PC-9 (cell line): ENCODE measurements at regions of chrX and their contacts with region 1.

Region 1: DNA sequence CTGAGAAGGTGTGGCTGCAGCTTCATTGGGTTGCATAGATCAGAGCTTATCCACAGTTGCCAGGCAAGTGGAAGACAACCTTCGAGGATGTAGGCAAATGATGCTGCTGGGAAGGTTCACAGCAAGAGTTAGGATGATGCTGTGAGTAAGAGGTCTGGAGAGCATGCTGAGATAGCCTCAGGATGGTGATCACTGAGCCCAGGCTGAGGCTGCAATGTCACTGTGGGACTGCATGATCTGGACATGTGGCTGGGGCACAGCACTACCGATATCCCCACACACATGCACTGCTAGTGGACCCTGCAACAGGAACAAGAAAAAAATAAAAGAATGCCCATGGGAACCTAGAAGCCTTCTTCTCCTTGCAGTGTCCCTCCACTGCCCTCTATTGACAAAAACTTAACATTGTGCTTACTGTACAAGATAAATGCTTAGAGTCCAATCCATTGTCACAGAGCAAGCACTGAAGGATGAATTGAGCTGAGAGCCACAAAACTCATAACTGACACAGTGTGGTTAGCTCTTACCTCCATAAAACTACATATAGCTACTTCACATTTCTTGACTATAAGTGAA is 105.6 kb downstream of the CNKSR2 start:
- DNase-seq: peak; percentile 2 to 35
- H3K4me3 ChIP-seq: no peak overlapping the region
- H3K27ac ChIP-seq: no peak overlapping the region
- H3K4me1 ChIP-seq: no peaks in the 10 kb centered on the region
- H3K27me3 ChIP-seq: no peaks in the 10 kb centered on the region
- CTCF ChIP-seq: peak; percentile 63

Region 2: DNA sequence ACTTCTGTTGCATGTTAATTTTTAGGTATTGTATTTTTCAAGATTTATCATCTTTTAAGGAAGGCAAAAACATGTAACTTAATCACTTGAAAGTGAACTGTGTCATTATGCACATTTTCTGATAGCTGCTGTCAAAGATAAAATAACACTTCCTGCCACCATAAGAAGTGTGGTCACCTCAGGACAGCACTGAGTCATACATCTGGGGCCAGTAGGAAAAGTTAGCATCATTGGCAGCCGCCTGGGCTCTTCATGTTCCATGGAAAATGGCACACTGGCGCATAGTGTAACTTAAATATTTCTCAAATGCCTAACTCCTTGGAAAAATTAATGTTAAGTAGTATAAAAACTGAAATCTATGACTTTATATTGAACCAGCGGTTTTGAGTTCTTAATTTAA is 81.4 kb before region 1 on chrX:
- CTCF ChIA-PET with region 1: no interaction called
- POLR2A ChIA-PET with region 1: no interaction called
- intact Hi-C with region 1: no loop called
- DNase-seq: no peak
- H3K4me3 ChIP-seq: no peak overlapping the region
- H3K27ac ChIP-seq: no peak overlapping the region
- H3K4me1 ChIP-seq: no peaks in the 10 kb centered on the region
- H3K27me3 ChIP-seq: no peaks in the 10 kb centered on the region
- CTCF ChIP-seq: no peak

Region 3: GRCh38 chrX:21725496-21725895 is 245.7 kb after region 1 on chrX:
- CTCF ChIA-PET with region 1: no interaction called
- POLR2A ChIA-PET with region 1: no interaction called
- intact Hi-C with region 1: loop called (anchors 5 kb)
- DNase-seq: no peak
- H3K4me3 ChIP-seq: no peak overlapping the region
- H3K27ac ChIP-seq: no peak overlapping the region
- H3K4me1 ChIP-seq: no peaks in the 10 kb centered on the region
- H3K27me3 ChIP-seq: no peaks in the 10 kb centered on the region
- CTCF ChIP-seq: peak; percentile 63

Region 4: DNA sequence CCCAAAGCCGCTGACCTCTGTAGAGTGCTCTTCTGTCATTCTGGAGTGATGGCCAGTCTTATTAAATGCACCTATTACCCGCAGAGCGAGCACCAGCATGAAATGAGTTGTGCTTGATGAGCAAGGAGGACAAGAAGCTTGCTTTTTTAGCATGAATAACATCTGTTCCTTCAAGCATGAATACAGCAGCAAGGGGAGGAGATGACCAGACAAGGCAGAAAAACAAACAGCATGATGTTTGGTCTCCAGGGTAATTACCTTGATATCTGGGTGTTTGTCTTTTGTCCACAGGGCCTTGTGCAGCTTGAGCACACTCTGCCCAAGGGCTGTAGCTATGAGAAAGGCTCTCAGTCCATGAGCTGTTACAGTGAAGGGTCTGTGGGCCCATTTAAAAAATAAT is 1195.1 kb after region 1 on chrX:
- CTCF ChIA-PET with region 1: no interaction called
- POLR2A ChIA-PET with region 1: no interaction called
- intact Hi-C with region 1: no loop called
- DNase-seq: peak in 1 of 2 experiments; percentile 35
- H3K4me3 ChIP-seq: no peak overlapping the region
- H3K27ac ChIP-seq: no peak overlapping the region
- H3K4me1 ChIP-seq: no peaks in the 10 kb centered on the region
- H3K27me3 ChIP-seq: no peaks in the 10 kb centered on the region
- CTCF ChIP-seq: no peak